CD8-positive, alpha-beta memory T cell (primary cell): ENCODE measurements at regions of chr3 and their contacts with region 1.

Region 1: DNA sequence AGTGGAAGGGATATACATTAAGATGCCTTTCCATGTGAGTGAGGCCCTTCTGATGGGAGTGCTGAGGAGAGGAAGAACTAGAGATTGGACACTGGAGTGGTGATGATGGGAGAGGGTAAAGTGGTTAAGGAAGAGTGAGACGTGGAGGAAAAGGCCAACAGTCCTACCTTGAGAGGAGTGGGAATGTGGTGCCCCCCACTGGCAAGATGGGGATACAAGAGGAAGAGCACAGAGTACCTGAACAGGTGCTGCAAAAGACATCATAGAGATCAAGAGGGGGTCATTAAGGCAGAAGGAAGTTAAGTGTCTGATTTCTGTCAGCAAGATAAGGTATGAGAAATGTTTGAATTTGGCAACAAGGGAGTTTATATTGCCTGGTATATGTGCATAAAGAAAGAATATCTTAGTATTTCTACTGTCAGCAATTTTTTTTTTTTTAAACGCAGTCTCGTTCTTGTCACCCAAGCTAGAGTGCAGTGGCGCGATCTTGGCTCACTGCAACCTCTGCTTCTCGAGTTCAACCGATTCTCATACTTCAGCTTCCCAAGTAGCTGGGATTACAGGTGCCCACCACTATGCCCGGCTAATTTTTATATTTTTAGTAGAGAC is 34.0 kb downstream of the ARIH2 start:
- DNase-seq: peak; percentile 32 to 65 (median 38)
- H3K4me3 ChIP-seq: no peak overlapping the region
- H3K4me3 Mint-ChIP-seq: no peak overlapping the region
- H3K27ac ChIP-seq: no peak overlapping the region
- H3K27ac Mint-ChIP-seq: peak overlapping the region in 4 of 8 donors; percentile 3 to 66 (median 5)
- H3K4me1 ChIP-seq: no peaks in the 10 kb centered on the region
- H3K4me1 Mint-ChIP-seq: peaks cover 22 to 36% (median 25%) of the 10 kb centered on the region in 3 donors
- H3K27me3 ChIP-seq: no peaks in the 10 kb centered on the region
- H3K27me3 Mint-ChIP-seq: no peaks in the 10 kb centered on the region

Region 2: GRCh38 chr3:48609088-48610005 is 343.3 kb before region 1 on chr3 and contains the start of gene UQCRC1:
- CTCF ChIA-PET with region 1: no interaction called
- POLR2A ChIA-PET with region 1: interaction called, 13 read pairs
- DNase-seq: peak; percentile 88 to 94 (median 92)
- H3K4me3 ChIP-seq: peak within 1 kb of the TSS; percentile 96
- H3K4me3 Mint-ChIP-seq: peak within 1 kb of the TSS; percentile 91 to 100 (median 98)
- H3K27ac ChIP-seq: peak within 1 kb of the TSS; percentile 83
- H3K27ac Mint-ChIP-seq: peak within 1 kb of the TSS; percentile 70 to 99 (median 97)
- H3K4me1 ChIP-seq: peaks cover 13% of the 10 kb centered on the region
- H3K4me1 Mint-ChIP-seq: peaks cover 16 to 23% (median 19%) of the 10 kb centered on the region in 3 donors
- H3K27me3 ChIP-seq: no peaks in the 10 kb centered on the region
- H3K27me3 Mint-ChIP-seq: no peaks in the 10 kb centered on the region
- total RNA-seq, gene UQCRC1: 244 to 245 TPM